CD14-positive monocyte (primary cell): ENCODE measurements at regions of chr15 and their contacts with region 1.

Region 1: DNA sequence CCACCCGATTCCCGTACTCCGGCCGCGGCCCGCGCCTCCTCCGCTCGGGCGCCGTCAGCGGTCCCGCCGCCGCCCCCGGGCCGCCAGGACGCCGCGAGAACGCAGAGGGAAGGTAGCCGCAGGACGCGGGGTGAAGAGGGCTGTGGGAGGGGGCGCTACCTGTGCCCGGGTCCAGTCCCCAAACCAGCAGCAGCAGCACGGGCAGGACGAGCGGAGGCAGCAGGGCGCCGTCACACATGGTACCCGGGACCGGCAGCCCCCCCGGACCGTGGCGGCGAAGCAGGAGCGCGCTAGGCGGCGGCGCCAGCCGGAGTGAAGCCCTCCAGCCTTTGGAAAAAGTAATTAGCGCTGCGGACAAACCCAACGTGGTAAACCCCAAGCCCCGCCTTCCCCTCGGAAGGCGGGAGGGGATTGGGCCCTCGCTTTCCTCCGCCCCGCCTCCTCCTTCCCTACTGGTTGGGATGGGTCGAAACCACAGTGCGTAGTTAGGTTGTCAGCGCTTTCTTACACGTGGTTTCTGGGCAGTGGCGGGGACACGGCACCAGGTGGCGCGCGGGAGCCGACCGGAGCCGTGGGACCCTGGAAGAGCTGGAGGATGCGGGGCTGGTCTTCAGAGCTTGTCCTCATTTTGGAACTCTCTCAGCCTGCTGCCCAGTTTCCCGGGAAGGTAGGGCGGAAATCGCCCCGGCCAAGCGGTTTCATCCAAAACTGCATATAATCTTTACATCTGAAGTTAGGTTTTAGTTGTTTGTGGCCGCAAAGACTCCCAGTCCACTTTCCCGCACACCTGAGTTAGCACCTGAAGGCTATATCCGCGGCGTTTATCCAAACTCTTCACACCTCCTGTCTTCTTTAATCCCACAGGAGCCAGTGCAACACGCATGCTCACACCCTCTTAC is at the start of gene ADAMTS17:
- DNase-seq: peak; percentile 92 to 95 (median 95)
- H3K4me3 ChIP-seq: peak within 1 kb of the TSS; percentile 36 to 80 (median 40)
- H3K4me3 Mint-ChIP-seq: peak within 1 kb of the TSS; percentile 72
- H3K27ac ChIP-seq: no peak within 1 kb of the TSS
- H3K27ac Mint-ChIP-seq: peak within 1 kb of the TSS in 2 of 7 donors; percentile 26 to 73
- H3K4me1 ChIP-seq: peaks cover 6 to 17% of the 10 kb centered on the region in 2 donors
- H3K4me1 Mint-ChIP-seq: peaks cover 8% of the 10 kb centered on the region
- H3K27me3 ChIP-seq: peaks cover 46 to 76% of the 10 kb centered on the region in 2 donors
- H3K27me3 Mint-ChIP-seq: peaks cover 57 to 73% (median 65%) of the 10 kb centered on the region in 3 donors
- CTCF ChIP-seq: peak; percentile 98
- polyA plus RNA-seq, gene ADAMTS17: 0.03 to 0.25 TPM in 2 of 3 donors, not detected in the other

Region 2: GRCh38 chr15:99928429-99928981 is 413.4 kb before region 1 on chr15:
- intact Hi-C with region 1: loop called (anchors 5 kb)
- DNase-seq: peak; percentile 71 to 89 (median 82)
- H3K4me3 ChIP-seq: peak overlapping the region; percentile 32 to 64 (median 35)
- H3K4me3 Mint-ChIP-seq: peak overlapping the region; percentile 75 to 88
- H3K27ac ChIP-seq: peak overlapping the region in 1 of 2 donors; percentile 20
- H3K27ac Mint-ChIP-seq: peak overlapping the region in 6 of 7 donors; percentile 57 to 77 (median 66)
- H3K4me1 ChIP-seq: peaks cover 14 to 17% of the 10 kb centered on the region in 2 donors
- H3K4me1 Mint-ChIP-seq: peaks cover 13% of the 10 kb centered on the region
- H3K27me3 ChIP-seq: peaks cover 10 to 25% of the 10 kb centered on the region in 2 donors
- H3K27me3 Mint-ChIP-seq: peaks cover 30 to 43% (median 32%) of the 10 kb centered on the region in 3 donors
- CTCF ChIP-seq: peak; percentile 56

Region 3: GRCh38 chr15:100572362-100572983 is 230.6 kb after region 1 on chr15:
- intact Hi-C with region 1: loop called (anchors 5 kb)
- DNase-seq: peak in 2 of 3 donors; percentile 3 to 62
- H3K4me3 ChIP-seq: no peak overlapping the region
- H3K4me3 Mint-ChIP-seq: no peak overlapping the region
- H3K27ac ChIP-seq: no peak overlapping the region
- H3K27ac Mint-ChIP-seq: no peak overlapping the region
- H3K4me1 ChIP-seq: no peaks in the 10 kb centered on the region
- H3K4me1 Mint-ChIP-seq: no peaks in the 10 kb centered on the region
- H3K27me3 ChIP-seq: no peaks in the 10 kb centered on the region
- H3K27me3 Mint-ChIP-seq: no peaks in the 10 kb centered on the region
- CTCF ChIP-seq: peak; percentile 88